ENCODE measurements at regions of chr14 and their contacts with region 1.

Region 1: GRCh38 chr14:64303471-64303917 is 9.3 kb upstream of the ESR2 start:
- DNase-seq: peak; percentile 52 to 78 (median 74)
- H3K4me3 ChIP-seq: no peak overlapping the region
- H3K27ac ChIP-seq: no peak overlapping the region
- H3K4me1 ChIP-seq: no peaks in the 10 kb centered on the region
- H3K27me3 ChIP-seq: no peaks in the 10 kb centered on the region

Region 2: GRCh38 chr14:63800651-63801375 is 502.7 kb before region 1 on chr14:
- CTCF ChIA-PET with region 1: interaction called, 34 read pairs
- POLR2A ChIA-PET with region 1: no interaction called
- DNase-seq: no peak
- H3K4me3 ChIP-seq: no peak overlapping the region
- H3K27ac ChIP-seq: no peak overlapping the region
- H3K4me1 ChIP-seq: no peaks in the 10 kb centered on the region
- H3K27me3 ChIP-seq: peaks cover 0 to 2% (median 0%) of the 10 kb centered on the region in 5 experiments

Region 3: GRCh38 chr14:64012720-64013119 is 290.8 kb before region 1 on chr14:
- CTCF ChIA-PET with region 1: interaction called, 31 read pairs
- POLR2A ChIA-PET with region 1: no interaction called
- DNase-seq: no peak
- H3K4me3 ChIP-seq: no peak overlapping the region
- H3K27ac ChIP-seq: no peak overlapping the region
- H3K4me1 ChIP-seq: no peaks in the 10 kb centered on the region
- H3K27me3 ChIP-seq: no peaks in the 10 kb centered on the region

Region 4: DNA sequence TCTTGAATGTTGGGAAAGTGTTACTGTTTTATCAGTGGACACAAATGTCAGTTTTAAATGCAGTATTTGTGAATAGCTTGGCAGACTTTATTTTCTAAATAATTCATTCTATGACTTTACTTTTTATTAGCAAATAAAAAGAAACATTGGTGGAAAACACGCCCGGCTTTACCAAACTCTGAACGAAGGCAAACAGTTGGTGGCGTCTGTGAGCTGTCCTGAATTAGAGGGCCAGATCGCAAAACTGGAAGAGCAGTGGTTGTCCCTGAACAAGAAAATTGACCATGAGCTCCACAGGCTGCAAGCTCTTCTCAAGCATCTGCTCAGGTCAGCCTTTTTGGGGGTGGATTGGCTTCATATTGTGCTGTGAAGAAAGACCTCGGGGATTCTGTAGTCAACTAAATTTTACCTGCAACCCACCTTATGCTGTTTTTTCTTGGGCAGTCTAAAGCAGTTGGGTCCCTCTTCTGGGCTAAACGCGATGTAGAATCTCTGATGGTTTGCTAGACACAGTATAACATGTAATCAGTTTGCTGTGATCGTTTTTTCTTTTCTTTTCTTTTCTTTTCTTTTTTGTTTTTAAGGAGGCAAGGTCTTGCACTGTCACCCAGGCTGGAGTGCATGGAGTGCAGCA is 165.7 kb before region 1 on chr14:
- CTCF ChIA-PET with region 1: interaction called, 87 read pairs
- POLR2A ChIA-PET with region 1: no interaction called
- DNase-seq: peak; percentile 8 to 18 (median 11)
- H3K4me3 ChIP-seq: no peak overlapping the region
- H3K27ac ChIP-seq: no peak overlapping the region
- H3K4me1 ChIP-seq: peaks cover 0 to 2% (median 0%) of the 10 kb centered on the region in 4 experiments
- H3K27me3 ChIP-seq: no peaks in the 10 kb centered on the region

Region 5: DNA sequence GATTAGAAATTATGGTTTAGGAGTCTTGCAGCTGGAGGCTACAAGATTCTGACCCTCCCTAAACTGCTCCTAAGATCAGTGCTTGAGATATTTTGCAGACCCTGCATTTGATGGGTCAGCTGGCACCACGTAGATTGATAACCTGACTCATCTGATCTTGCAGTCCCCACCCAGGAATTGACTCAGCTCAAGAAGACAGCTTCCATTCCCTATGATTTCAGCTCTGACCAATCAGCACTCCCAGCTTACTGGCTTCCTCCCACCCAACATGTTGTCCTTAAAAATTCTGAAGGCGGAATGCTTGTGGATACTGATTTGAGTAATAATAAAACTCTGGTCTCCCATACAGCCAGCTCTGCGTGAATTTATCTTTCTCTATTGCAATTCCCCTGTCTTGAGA is 61.4 kb after region 1 on chr14:
- CTCF ChIA-PET with region 1: interaction called, 3 read pairs
- POLR2A ChIA-PET with region 1: interaction called, 10 read pairs
- DNase-seq: no peak
- H3K4me3 ChIP-seq: no peak overlapping the region
- H3K27ac ChIP-seq: no peak overlapping the region
- H3K4me1 ChIP-seq: no peaks in the 10 kb centered on the region
- H3K27me3 ChIP-seq: no peaks in the 10 kb centered on the region